Naive thymus-derived CD4-positive, alpha-beta T cell (primary cell): ENCODE measurements at regions of chr4 and their contacts with region 1.

Region 1: GRCh38 chr4:102554482-102554881 is 53.3 kb downstream of the NFKB1 start:
- DNase-seq: no peak
- ATAC-seq: no peak
- H3K4me3 ChIP-seq: no peak overlapping the region
- H3K4me3 Mint-ChIP-seq: no peak overlapping the region
- H3K27ac ChIP-seq: no peak overlapping the region
- H3K27ac Mint-ChIP-seq: peak overlapping the region in 2 of 9 donors; percentile 10 to 84
- H3K4me1 ChIP-seq: peaks cover 14 to 32% of the 10 kb centered on the region in 2 donors
- H3K4me1 Mint-ChIP-seq: peaks cover 38 to 54% (median 47%) of the 10 kb centered on the region in 7 donors
- H3K27me3 ChIP-seq: no peaks in the 10 kb centered on the region
- H3K27me3 Mint-ChIP-seq: no peaks in the 10 kb centered on the region

Region 2: GRCh38 chr4:102543030-102543928 is 11.2 kb before region 1 on chr4:
- CTCF ChIA-PET with region 1: no interaction called
- POLR2A ChIA-PET with region 1: interaction called, 4 read pairs
- intact Hi-C with region 1: loop called (anchors 1 to 2 kb)
- DNase-seq: no peak
- ATAC-seq: no peak
- H3K4me3 ChIP-seq: no peak overlapping the region
- H3K4me3 Mint-ChIP-seq: no peak overlapping the region
- H3K27ac ChIP-seq: no peak overlapping the region
- H3K27ac Mint-ChIP-seq: peak overlapping the region in 3 of 9 donors; percentile 46 to 75 (median 74)
- H3K4me1 ChIP-seq: peaks cover 0 to 4% of the 10 kb centered on the region in 2 donors
- H3K4me1 Mint-ChIP-seq: peaks cover 23 to 67% (median 54%) of the 10 kb centered on the region in 7 donors
- H3K27me3 ChIP-seq: no peaks in the 10 kb centered on the region
- H3K27me3 Mint-ChIP-seq: no peaks in the 10 kb centered on the region

Region 3: GRCh38 chr4:102564399-102565059 is 10.0 kb after region 1 on chr4:
- CTCF ChIA-PET with region 1: interaction called, 3 read pairs
- POLR2A ChIA-PET with region 1: interaction called, 6 read pairs
- intact Hi-C with region 1: loop called in 1 of 2 experiments (anchors 1 kb)
- DNase-seq: no peak
- ATAC-seq: peak; percentile 58
- H3K4me3 ChIP-seq: no peak overlapping the region
- H3K4me3 Mint-ChIP-seq: peak overlapping the region in 1 of 10 donors; percentile 6
- H3K27ac ChIP-seq: no peak overlapping the region
- H3K27ac Mint-ChIP-seq: peak overlapping the region in 6 of 9 donors; percentile 8 to 73 (median 34)
- H3K4me1 ChIP-seq: peaks cover 10 to 41% of the 10 kb centered on the region in 2 donors
- H3K4me1 Mint-ChIP-seq: peaks cover 45 to 70% (median 53%) of the 10 kb centered on the region in 7 donors
- H3K27me3 ChIP-seq: no peaks in the 10 kb centered on the region
- H3K27me3 Mint-ChIP-seq: no peaks in the 10 kb centered on the region